GM12878 (cell line): ENCODE measurements at regions of chr1 and their contacts with region 1.

Region 1: DNA sequence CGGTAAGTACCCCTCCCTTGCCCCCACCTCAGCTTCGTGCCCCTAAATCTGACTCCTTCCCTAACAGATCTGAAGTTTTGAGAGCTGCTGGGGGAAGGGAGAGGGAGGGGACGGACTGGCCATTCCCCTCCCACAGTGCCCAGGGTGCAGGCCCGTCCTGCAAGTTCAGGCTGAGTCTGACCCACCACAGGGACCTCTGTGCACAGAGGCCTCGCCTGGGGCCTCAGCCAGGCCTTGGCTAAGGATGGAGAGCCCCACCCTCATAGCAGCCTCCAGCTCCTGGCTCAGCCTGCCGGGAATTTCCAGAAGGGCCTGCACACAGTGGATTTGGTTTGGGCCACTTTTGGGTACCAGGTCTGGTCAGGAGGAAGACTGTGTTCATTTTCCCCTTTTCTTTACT is 31.2 kb upstream of the TNFRSF1B start:
- DNase-seq: no peak
- ATAC-seq: no peak; the same call in 2 of the 3 replicates
- H3K4me3 ChIP-seq: no peak overlapping the region
- H3K27ac ChIP-seq: no peak overlapping the region
- H3K4me1 ChIP-seq: no peaks in the 10 kb centered on the region
- H3K27me3 ChIP-seq: no peaks in the 10 kb centered on the region
- CTCF ChIP-seq: no peak
- EP300 ChIP-seq: no peak
- POLR2A ChIP-seq: peak; percentile 42; the same call in 1 of the 2 replicates
- RAD21 ChIP-seq: no peak

Region 2: GRCh38 chr1:12177999-12178441 is 42.4 kb after region 1 on chr1:
- CTCF ChIA-PET with region 1: interaction called, 3 read pairs
- POLR2A ChIA-PET with region 1: interaction called, 3 read pairs
- RAD21 ChIA-PET with region 1: no interaction called
- SMC1A ChIA-PET with region 1: interaction called, 347 read pairs
- in situ Hi-C with region 1: no loop called
- intact Hi-C with region 1: loop called (anchors 5 kb)
- DNase-seq: no peak
- ATAC-seq: no peak
- H3K4me3 ChIP-seq: no peak overlapping the region
- H3K27ac ChIP-seq: no peak overlapping the region
- H3K4me1 ChIP-seq: peaks cover 52% of the 10 kb centered on the region
- H3K27me3 ChIP-seq: no peaks in the 10 kb centered on the region
- CTCF ChIP-seq: no peak
- EP300 ChIP-seq: no peak
- POLR2A ChIP-seq: no peak; the same call in 1 of the 2 replicates
- RAD21 ChIP-seq: no peak